ENCODE measurements at regions of chr6 and their contacts with region 1.

Region 1: DNA sequence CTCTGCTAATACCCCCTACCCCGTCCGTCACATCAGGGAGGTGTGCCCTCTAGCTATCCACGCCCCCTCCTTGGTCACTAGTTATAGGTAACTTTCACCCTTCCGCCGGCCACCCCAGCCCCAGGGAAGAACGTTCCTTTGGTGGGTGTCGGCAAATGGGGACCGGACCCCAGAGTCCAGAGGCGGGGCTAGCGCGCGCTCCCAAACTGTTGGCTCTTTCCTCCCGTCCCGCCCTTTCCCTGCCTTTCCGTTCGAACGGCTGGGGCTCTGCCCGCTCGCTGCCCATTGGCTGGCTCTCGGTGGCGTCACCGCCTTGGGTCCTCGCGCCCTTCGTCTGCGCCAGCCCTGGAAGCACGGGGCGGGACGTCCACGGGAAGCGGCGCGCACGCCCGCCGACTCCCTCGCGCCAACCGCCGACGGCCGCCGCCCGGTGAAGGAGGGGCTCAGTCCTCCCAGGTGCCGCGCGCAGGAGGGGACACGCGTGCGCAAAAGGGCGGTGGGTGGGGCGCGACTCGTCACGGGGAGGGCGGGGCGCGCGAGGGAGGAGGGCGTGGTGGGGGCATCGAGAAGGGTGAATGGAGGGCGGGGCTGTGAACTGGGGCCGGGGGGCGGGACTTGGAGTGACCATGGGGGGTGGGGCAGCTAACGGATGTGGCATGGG is 634 bp upstream of the PHF1 start:
- DNase-seq: peak; percentile 99
- H3K4me3 Mint-ChIP-seq: peak overlapping the region; percentile 92
- H3K27ac Mint-ChIP-seq: peak overlapping the region; percentile 91
- H3K4me1 Mint-ChIP-seq: peaks cover 40% of the 10 kb centered on the region
- H3K27me3 Mint-ChIP-seq: no peaks in the 10 kb centered on the region

Region 2: DNA sequence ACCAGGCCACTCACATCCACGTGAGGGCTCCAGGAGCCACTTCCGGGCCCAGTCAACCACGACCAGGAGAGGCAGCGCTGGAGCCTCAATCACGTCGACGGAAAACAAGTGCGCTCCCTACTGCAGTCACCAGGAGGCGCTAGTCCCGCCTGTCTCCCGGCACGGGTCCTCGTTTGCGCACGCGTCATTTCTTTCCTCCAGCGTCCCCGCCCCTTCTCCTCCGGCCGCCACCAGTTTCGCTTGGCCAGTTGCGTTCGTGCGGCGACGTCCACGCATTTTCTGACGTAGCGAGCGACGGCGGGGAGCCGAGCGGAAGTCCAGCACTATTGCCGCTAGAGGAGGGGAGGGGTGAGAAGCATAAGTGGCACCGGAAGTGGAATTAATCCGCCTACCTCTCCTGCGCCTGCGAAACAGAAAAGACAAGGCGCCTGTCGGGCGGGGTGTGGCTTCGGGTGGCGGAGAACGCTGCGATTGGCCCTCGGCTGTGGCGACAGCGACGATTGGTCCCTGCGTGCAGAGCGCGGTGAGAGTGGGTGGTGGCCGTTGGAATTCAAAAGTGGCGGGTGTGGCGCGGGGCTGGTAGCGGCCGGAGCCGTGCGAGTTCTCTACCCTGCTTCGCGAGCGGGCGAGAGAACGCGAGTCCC is 18.8 kb before region 1 on chr6 and contains the start of gene KIFC1:
- intact Hi-C with region 1: loop called (anchors 1 kb)
- DNase-seq: peak; percentile 100
- H3K4me3 Mint-ChIP-seq: peak within 1 kb of the TSS; percentile 89
- H3K27ac Mint-ChIP-seq: peak within 1 kb of the TSS; percentile 97
- H3K4me1 Mint-ChIP-seq: peaks cover 42% of the 10 kb centered on the region
- H3K27me3 Mint-ChIP-seq: peaks cover 2% of the 10 kb centered on the region
- total RNA-seq, gene KIFC1: 64.9 and 66.5 TPM in 2 replicates

Region 3: DNA sequence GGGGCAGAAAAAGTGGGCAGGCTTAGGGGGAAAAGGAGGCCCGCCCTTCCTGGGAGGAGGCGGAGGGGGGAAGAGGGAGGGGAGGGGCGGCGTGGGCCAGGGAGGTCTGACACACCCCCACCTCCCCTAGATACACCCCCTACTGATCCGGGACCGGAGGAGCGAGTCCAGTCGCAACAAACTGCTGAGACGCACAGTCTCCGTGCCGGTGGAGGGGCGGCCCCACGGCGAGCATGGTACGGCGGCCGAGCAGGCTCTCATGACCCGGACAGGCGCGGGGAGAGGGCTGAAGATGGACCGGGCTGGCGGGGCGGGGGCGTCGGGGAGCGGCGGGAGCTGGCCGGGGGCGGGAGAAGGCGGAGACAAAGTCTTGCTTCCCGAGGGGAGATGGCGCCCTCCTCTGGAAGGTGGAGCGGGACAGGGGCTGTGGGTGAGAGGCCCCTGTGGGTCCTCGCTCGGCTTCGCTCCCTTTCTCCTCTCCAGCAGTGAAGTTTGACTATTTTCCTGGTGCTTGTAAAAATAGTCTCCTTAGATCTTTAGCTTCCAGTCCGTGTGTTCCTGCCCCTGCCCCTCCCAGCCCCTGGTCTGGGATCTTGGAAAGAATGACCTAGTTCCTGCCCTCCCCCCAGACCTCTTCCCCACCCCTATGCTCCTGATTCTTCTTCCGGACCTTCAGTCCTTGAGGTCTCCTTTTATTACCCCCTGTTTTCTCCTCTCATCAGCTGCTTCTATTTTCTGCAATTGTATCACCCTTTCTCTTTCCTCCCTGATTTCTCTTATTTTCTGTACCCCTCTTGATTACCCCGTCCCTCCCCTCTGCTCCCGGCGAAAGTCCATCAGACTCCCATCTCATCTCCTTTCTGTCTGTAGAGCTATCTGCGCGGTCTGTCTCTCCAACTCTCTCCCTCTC is 15.7 kb after region 1 on chr6:
- intact Hi-C with region 1: loop called (anchors 2 kb)
- DNase-seq: peak; percentile 93
- H3K4me3 Mint-ChIP-seq: peak overlapping the region; percentile 92
- H3K27ac Mint-ChIP-seq: peak overlapping the region; percentile 98
- H3K4me1 Mint-ChIP-seq: peaks cover 78% of the 10 kb centered on the region
- H3K27me3 Mint-ChIP-seq: no peaks in the 10 kb centered on the region

Region 4: DNA sequence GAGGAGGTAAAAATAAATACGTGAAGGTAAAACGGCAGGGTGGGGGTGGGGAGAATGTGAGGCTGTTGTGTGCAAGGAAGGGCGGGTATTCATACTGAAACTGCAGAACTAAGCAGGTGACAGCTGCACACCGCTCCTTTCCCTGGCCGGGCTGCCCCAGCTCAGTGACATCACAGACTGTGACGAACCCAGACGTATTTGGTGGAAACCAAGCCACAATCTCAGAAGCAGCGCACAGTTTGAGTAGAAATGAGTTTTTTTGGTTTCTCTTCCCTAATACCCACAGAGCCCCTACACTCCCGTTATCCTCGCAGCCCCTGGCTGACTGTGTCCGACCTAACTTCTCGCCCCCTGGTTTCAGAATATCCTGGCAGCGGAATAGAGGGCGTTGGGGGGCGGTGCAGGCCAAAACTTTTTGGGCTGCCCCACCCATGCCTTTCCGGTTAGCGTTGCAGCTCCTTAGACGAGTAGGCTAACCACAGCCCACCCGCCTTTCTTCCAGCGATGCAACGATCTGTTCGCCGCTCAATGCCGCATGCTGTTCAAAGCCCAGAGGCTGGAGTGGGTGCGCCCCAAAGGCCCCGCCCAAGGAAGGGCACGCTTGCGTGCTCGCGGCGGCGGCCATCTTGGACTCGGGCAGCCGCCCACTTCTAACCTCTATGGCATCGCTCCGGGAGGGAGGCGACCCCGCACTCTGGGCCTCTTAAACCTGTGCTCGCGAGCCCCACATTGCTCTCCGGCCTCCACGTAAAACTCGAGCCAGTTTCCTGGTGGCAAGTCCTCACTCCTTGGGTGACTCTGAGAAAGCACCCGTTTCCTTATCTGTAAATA is 160.8 kb after region 1 on chr6:
- intact Hi-C with region 1: loop called (anchors 1 kb)
- DNase-seq: peak; percentile 98
- H3K4me3 Mint-ChIP-seq: peak overlapping the region; percentile 86
- H3K27ac Mint-ChIP-seq: peak overlapping the region; percentile 99
- H3K4me1 Mint-ChIP-seq: peaks cover 52% of the 10 kb centered on the region
- H3K27me3 Mint-ChIP-seq: no peaks in the 10 kb centered on the region

Measured in activated CD4-positive, alpha-beta T cell treated with anti-CD3 and anti-CD28 coated beads, Interleukin-2, amount 10 ng/mL, durations not matched to agents 24 days and 14 days (primary cell).